GM18951 (cell line): ENCODE measurements at regions of chr13 and their contacts with region 1.

Region 1: DNA sequence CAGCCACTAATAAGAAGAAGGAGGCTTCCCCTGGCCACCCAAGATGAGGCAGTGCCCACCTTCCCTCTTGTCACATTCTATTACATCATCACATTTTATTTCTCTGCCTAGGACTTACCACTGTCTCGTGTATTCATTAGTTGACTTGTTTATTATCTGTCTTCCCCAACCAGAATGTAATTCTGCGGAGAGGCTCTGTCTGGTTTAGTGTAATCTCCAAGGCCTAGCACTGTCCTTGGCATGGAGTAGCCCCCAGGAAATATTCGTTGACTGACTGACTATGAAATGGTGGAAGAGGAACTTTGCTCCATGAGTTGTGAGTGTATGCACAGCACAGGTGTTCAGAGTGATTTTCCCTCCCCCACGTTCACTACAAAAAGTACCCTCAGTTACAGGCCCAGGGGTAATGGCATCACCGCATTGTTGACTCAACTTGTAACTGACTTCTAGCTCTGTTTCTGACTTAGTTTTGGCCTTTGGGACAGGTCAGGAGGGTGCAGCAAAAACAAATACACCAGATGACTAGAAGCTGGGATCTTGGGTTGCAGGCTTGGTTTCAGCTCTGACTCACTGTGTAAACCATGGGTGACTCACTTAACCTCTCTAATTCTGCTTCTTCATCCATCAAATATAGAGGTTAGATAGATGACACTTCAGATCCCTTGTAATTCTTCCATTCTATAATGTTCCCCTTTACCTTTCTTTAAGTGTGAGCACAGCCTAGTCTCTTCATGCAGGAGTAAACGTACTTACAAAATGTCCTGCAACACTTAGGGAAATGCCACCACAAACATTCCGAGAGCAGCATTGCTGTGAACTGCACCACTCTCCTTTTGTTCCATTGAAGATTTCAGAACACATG is 229.7 kb downstream of the KCNRG start:
- POLR2A ChIP-seq: no peak

Region 2: DNA sequence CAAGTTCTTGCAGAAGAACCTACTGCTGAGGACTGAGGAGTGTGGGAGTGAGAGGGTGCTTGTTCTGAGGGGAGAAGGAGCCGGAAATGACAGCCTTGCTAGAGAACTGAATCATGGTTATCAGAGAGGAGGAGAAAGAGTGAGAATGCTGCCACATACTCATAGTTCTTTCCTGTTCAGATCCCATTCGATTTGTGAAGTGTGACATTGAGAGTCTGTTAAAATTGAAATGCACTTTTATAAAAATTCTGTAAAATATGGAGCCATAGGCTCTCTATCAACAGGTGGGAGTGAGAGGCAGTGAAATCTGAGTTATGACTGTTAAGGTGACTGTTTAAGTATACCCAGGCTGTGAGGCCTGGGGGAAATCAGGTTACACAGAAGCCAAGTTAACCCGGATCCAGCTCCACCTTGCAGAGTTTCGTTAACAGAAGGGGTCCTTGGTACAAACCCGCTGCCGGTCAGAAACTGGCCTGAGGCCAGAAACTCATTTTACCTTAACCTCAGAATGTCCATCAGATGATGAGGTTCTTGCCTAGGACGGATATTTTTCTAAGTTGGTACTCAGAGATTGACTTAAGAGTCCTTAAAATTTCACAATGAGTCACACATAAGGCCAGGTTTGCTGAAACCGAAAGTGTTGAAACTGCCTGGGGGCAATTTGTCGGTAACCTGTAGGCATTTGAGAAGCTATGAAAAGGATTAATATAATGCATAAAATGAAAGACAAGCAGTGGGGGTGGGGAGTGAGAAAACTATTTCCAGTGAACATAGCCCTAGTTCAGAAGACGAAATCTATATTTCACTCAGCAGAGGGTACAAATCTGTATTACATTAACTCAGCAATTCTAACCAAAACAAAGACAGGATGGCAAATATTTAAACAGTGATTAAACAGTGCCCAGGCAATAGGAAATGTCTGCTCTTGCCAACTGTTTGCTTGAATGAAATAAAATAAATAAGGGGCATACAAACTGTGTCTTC is 120.8 kb after region 1 on chr13:
- in situ Hi-C with region 1: loop called (anchors 10 kb)
- POLR2A ChIP-seq: no peak